ENCODE measurements at regions of chr20 and their contacts with region 1.

Region 1: GRCh38 chr20:57383447-57384347 is 7.5 kb upstream of the RBM38 start:
- DNase-seq: no peak
- H3K4me3 ChIP-seq: no peak overlapping the region
- H3K27ac ChIP-seq: no peak overlapping the region
- H3K4me1 ChIP-seq: no peaks in the 10 kb centered on the region
- H3K27me3 ChIP-seq: no peaks in the 10 kb centered on the region
- CTCF ChIP-seq: no peak

Region 2: GRCh38 chr20:56316051-56316450 is 1067.6 kb before region 1 on chr20:
- CTCF ChIA-PET with region 1: no interaction called
- POLR2A ChIA-PET with region 1: no interaction called
- intact Hi-C with region 1: no loop called
- DNase-seq: no peak
- H3K4me3 ChIP-seq: no peak overlapping the region
- H3K27ac ChIP-seq: no peak overlapping the region
- H3K4me1 ChIP-seq: no peaks in the 10 kb centered on the region
- H3K27me3 ChIP-seq: peaks cover 80% of the 10 kb centered on the region
- CTCF ChIP-seq: no peak

Region 3: GRCh38 chr20:57346477-57346876 is 37.2 kb before region 1 on chr20:
- CTCF ChIA-PET with region 1: no interaction called
- POLR2A ChIA-PET with region 1: no interaction called
- intact Hi-C with region 1: no loop called
- DNase-seq: peak; percentile 70 to 73
- H3K4me3 ChIP-seq: no peak overlapping the region
- H3K27ac ChIP-seq: no peak overlapping the region
- H3K4me1 ChIP-seq: peaks cover 10% of the 10 kb centered on the region; the same call in 1 of the 2 replicates
- H3K27me3 ChIP-seq: no peaks in the 10 kb centered on the region
- CTCF ChIP-seq: peak; percentile 93

Region 4: DNA sequence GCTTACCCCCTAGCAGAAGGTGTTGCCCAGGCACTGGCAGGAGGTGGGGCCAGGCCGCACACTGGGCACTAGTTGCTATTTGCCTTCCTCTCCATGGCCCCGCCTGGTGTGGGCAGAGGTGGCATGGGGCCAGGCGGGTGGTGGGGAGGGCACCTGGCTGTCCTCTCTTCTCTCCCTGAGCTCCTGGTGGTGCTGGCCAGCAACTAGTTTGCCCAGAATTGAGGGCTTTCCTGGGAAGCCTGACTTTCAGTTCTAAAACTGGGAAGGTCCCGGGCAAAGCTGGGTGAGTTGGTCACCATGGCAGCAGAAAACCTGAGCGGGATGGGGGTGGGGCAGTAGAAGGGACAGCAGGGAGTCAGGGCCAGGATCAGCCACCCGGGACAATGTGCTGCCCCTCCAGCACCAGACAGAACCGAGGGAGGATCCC is 55.7 kb after region 1 on chr20:
- CTCF ChIA-PET with region 1: interaction called, 11 read pairs
- POLR2A ChIA-PET with region 1: interaction called, 43 read pairs
- intact Hi-C with region 1: no loop called
- DNase-seq: peak; percentile 70 to 95
- H3K4me3 ChIP-seq: no peak overlapping the region
- H3K27ac ChIP-seq: no peak overlapping the region
- H3K4me1 ChIP-seq: peaks cover 25% of the 10 kb centered on the region
- H3K27me3 ChIP-seq: peaks cover 5% of the 10 kb centered on the region; the same call in 1 of the 2 replicates
- CTCF ChIP-seq: no peak

Region 5: GRCh38 chr20:57498425-57499400 is 115.0 kb after region 1 on chr20:
- CTCF ChIA-PET with region 1: interaction called, 24 read pairs
- POLR2A ChIA-PET with region 1: no interaction called
- intact Hi-C with region 1: loop called (anchors 1 kb)
- DNase-seq: peak in 1 of 2 experiments; percentile 27
- H3K4me3 ChIP-seq: no peak overlapping the region
- H3K27ac ChIP-seq: no peak overlapping the region
- H3K4me1 ChIP-seq: peaks cover 12% of the 10 kb centered on the region
- H3K27me3 ChIP-seq: no peaks in the 10 kb centered on the region
- CTCF ChIP-seq: peak; percentile 61

Region 6: DNA sequence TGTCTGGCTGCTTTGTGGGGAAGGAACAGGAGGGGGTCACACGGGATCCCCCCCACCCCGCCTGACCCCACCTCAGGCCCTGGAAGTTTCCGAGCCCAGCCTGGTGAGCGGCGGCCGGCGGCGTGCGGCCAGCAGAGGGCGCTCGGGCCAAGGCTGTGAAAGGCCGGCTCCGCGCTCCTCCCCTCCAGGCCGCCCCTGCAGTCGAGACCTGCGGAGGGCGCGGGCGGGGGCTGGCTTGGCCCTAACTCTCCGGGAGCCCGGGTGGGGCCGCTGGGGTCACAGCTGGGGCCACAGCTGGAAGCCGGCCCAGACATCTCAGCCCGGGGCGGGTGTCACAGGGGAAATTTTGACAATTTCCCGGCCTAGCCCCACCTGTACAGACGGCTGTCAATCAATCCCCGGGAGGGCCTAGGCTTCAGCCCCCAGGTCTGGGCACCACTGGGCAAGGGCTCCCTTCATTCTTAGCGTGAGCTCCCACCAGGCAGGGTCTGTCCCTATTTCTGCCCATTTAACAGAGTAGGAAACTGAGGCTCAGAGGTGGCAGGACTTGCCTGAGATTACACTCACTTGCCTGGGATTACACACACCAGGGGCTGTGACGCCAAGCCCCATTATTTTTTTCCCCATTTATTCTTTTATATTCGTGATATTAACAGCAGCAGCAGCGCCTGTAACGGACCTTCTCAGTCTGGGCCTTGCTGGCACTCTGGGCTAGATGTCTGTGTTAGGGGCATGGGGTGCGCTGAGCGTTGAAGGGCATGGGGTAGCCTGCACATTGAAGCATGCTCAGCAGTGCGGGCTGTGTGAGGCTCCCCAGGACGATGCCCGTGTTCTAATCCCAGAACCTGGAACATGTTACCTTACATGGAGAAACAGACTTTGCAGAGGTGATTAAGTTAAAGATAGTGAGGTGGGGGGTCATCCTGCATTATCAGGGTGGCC is 213.6 kb after region 1 on chr20:
- CTCF ChIA-PET with region 1: no interaction called
- POLR2A ChIA-PET with region 1: no interaction called
- intact Hi-C with region 1: loop called (anchors 5 kb)
- DNase-seq: peak in 1 of 2 experiments; percentile 73
- H3K4me3 ChIP-seq: peak overlapping the region; percentile 43; the same call in 1 of the 2 replicates
- H3K27ac ChIP-seq: no peak overlapping the region
- H3K4me1 ChIP-seq: peaks cover 4% of the 10 kb centered on the region; the same call in 1 of the 2 replicates
- H3K27me3 ChIP-seq: peaks cover 6% of the 10 kb centered on the region; the same call in 1 of the 2 replicates
- CTCF ChIP-seq: peak; percentile 97